Transverse colon (tissue), 4 donors: ENCODE measurements at regions of chr15 and their contacts with region 1.

Region 1: GRCh38 chr15:44711356-44712107 is at the start of gene B2M:
- DNase-seq: peak; percentile 97
- H3K4me3 ChIP-seq: peak within 1 kb of the TSS; percentile 77 to 95 (median 82)
- H3K27ac ChIP-seq: peak within 1 kb of the TSS; percentile 99
- H3K4me1 ChIP-seq: peaks cover 12 to 73% (median 32%) of the 10 kb centered on the region in 4 donors
- H3K27me3 ChIP-seq: no peaks in the 10 kb centered on the region
- CTCF ChIP-seq: no peak
- EP300 ChIP-seq: no peak
- POLR2A ChIP-seq: peak; percentile 100
- total RNA-seq, gene B2M: 1,352 to 7,131 (median 5,706) TPM

Region 2: DNA sequence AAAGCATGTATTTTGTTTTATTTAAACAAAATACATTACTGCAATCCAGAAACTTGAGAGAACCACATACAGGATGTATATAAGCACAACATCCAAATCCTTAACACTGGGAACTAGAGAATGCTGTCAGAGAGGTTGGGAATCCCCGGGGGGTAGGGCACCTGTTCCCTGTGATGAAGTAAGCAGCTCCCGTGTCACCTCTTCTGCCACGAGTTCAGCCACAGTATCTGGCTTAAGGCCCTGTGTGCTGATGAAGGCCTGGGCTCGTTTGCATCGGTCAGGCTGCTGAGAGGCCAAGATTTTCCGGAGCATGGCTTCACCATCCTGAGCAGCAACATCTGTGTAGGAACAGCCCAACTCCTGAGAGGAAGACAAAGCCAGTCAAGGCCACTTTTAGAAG is 138.1 kb before region 1 on chr15:
- in situ Hi-C with region 1: no loop called
- intact Hi-C with region 1: no loop called
- DNase-seq: no peak
- H3K4me3 ChIP-seq: no peak overlapping the region
- H3K27ac ChIP-seq: no peak overlapping the region
- H3K4me1 ChIP-seq: no peaks in the 10 kb centered on the region
- H3K27me3 ChIP-seq: no peaks in the 10 kb centered on the region
- CTCF ChIP-seq: no peak
- EP300 ChIP-seq: no peak
- POLR2A ChIP-seq: no peak

Region 3: DNA sequence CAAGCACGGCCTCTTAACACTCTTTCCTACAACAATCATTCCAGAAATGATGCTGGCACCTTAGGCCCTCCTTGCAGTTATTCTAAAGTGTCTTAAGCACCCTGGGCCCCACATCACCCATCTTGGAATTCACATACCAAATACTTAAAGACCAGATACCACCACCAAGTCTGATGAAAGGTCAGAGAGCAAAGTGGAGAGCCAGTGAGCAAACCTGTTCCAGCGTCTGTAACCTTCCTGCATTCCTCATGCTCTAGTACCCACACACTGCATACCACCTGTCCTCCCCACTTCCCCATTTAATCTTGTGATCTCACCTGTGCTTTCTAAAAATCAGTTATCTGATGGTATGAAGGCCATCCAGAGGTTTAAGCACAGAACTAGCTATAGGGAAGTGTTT is 41.0 kb before region 1 on chr15:
- in situ Hi-C with region 1: no loop called
- intact Hi-C with region 1: loop called (anchors 5 kb)
- DNase-seq: no peak
- H3K4me3 ChIP-seq: no peak overlapping the region
- H3K27ac ChIP-seq: no peak overlapping the region
- H3K4me1 ChIP-seq: no peaks in the 10 kb centered on the region
- H3K27me3 ChIP-seq: no peaks in the 10 kb centered on the region
- CTCF ChIP-seq: no peak
- EP300 ChIP-seq: no peak
- POLR2A ChIP-seq: no peak

Region 4: DNA sequence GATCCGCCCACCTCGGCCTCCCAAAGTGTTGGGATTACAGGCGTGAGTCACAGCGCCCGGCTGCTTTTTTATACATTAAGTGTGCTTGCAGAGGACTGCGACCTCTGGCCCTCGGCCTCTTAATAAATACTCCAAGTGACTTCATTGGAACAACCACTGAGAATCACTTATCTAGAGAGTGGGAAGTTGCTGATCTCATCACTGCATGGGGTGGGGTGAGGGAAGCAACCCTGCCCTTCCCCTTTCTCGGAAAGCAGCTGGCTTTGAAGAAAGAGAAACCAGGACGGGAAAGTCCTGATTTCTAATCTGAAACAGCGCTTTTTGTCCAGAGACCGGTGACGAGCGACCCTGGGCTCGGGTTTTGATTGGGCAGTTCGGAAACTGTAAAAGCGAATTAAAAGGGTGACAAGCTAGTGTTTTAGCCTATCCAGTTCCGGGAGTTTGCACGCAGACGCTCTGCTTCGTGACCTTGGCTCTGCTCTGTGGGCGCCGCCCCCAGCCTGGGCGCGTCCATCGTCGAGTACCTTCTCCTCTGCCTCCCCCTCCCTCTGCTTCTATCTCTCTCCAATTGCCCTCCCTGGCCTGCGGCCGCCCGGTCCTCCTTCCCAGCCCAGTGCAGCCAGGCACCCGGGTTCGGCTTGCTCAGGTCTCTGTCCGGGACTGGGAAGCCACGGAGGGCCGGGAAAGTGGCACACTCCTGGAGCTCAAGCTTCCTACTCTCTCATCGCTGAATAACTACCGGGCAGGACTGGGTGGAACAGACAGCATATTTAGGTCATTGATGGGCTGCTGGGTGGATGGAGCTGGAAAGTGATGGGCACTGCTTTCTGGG is 17.3 kb after region 1 on chr15:
- in situ Hi-C with region 1: no loop called
- intact Hi-C with region 1: loop called (anchors 1 kb)
- DNase-seq: peak; percentile 97
- H3K4me3 ChIP-seq: peak overlapping the region; percentile 56 to 89 (median 70)
- H3K27ac ChIP-seq: peak overlapping the region; percentile 98 to 99 (median 98)
- H3K4me1 ChIP-seq: peaks cover 12 to 57% (median 29%) of the 10 kb centered on the region in 4 donors
- H3K27me3 ChIP-seq: no peaks in the 10 kb centered on the region
- CTCF ChIP-seq: no peak
- EP300 ChIP-seq: peak; percentile 84
- POLR2A ChIP-seq: peak; percentile 99